ENCODE measurements at regions of chr12 and their contacts with region 1.

Region 1: GRCh38 chr12:45990468-45991283 is at the start of gene SCAF11:
- DNase-seq: peak; percentile 100
- ATAC-seq: peak; percentile 81
- total RNA-seq, gene SCAF11: 97.9 to 103 TPM

Region 2: GRCh38 chr12:46110928-46111699 is 120.4 kb after region 1 on chr12:
- intact Hi-C with region 1: loop called in 1 of 2 experiments (anchors 10 kb)
- DNase-seq: no peak
- ATAC-seq: peak; percentile 81

Region 3: DNA sequence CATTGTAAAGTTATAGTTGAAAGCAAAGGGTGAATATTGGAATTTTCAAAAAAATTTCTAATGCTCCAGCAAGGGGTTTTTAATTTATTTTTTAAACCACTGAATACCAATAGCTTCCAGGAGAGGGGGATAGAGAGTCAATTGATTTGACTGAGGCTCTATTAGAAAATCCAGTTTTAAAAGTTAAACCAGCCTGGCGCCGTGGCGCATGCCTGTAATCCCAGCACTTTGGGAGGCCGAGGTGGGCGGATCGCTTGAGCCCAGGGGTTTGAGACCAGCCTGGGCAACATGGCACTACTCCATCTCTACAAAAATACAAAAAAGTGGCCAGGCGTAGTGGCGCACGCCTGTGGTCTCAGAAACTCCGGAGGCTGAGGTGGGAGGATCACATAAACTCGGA is 685.1 kb after region 1 on chr12:
- intact Hi-C with region 1: loop called in 1 of 2 experiments (anchors 10 kb)
- DNase-seq: peak in 1 of 2 donors; percentile 21
- ATAC-seq: peak; percentile 54

Measured in left colon (tissue), 2 donors.